ENCODE measurements at regions of chr10 and their contacts with region 1.

Region 1: DNA sequence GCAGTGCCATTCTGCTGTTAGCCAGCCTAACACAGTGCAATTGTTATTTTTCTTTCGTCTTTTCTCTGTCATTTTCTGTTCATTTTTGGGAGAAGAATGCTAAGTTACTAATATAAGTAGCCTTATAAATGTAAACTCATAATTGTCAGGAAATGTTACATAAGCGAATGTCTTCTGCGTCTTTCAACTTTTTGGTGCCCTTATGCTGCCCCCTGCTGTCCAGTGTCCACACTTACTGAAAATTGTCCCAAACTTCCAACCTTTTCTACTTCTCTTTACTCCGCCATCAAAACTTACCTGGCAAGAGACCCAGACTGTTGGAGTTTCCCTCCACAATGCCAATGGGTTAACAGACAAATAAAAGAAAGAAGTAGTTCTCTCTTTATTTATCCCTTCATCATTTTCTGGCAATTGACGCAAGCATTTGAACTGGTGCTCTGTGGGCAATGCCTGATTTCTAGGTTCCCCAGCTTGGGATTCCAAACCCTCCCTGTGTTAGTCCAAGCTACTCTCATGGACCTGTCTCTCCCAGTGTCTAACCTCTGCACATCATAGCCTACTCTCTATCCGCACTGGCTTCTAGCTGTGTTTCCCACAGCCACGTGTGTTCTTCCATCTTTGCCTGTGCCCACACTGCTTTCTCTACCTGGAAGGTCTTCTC is 21.0 kb upstream of the EPC1 start:
- DNase-seq: peak in 1 of 2 experiments; percentile 73
- ATAC-seq: peak; percentile 56 to 68; a peak in 4 of 6 replicates
- H3K4me3 ChIP-seq: no peak overlapping the region
- H3K27ac ChIP-seq: peak overlapping the region in 1 of 2 experiments; percentile 46; a peak in 1 of 6 replicates
- H3K4me1 ChIP-seq: peaks cover 18% of the 10 kb centered on the region
- CTCF ChIP-seq: peak; percentile 90
- EP300 ChIP-seq: no peak
- POLR2A ChIP-seq: no peak
- RAD21 ChIP-seq: peak; percentile 81 to 83

Region 2: DNA sequence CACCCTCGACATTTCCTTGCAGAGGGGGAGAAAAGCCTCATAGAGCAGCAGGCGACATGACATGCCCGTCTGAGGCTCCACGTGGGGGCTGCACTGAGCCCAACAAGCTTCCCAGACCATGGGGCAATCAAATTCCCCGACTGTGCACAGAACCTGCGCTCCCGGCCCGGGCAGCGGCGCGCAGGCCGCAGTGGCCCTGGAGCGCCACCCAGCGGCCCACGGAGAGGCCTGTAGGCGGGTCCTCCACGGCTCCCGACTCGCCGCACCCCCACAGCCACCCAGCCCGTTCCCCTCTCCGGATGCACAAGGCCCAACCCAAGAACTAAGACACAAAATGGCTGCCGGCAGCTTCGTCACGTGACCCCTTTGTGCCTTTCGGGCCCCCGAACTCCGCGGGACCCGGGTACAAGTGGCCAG is 21.8 kb before region 1 on chr10:
- CTCF ChIA-PET with region 1: interaction called, 118 read pairs
- POLR2A ChIA-PET with region 1: interaction called, 3 read pairs
- DNase-seq: peak; percentile 93 to 97
- ATAC-seq: peak; percentile 89 to 96
- H3K4me3 ChIP-seq: peak overlapping the region; percentile 78
- H3K27ac ChIP-seq: peak overlapping the region; percentile 99 to 100
- H3K4me1 ChIP-seq: peaks cover 56% of the 10 kb centered on the region; the same call in 2 of the 3 replicates
- CTCF ChIP-seq: peak; percentile 95
- EP300 ChIP-seq: no peak
- POLR2A ChIP-seq: no peak
- RAD21 ChIP-seq: peak; percentile 72 to 94

Region 3: DNA sequence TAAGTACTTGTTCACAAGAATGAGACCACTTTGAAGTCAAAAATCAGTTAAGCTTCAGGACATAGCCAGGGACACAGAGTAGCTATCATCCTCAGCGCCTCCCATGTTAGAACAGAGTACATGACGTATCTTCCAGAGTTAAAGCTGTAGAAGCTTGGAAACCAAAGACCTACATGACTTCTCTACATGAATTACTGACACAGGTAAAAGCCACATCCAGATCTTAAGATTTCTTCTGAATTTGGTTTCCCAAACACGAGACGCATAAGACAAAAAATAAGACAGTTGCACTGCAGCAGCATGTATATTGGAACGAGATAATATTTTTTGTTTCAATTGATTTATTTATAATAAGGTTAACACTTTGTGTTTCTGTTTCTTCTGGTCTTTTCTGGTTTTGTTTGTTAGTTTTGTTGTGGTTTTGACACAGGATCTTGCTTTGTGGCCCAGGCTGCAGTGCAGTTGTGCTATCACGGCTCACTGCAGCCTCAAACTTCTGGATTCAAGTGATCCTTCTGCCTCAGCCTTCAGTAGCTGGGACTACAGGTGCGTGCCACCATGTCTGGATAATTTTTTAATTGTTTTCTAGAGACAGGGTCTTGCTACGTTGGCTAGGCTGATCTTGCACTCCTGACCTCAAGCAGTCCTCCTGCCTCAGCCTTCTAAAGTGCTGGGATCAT is 10.7 kb before region 1 on chr10:
- CTCF ChIA-PET with region 1: interaction called, 118 read pairs
- POLR2A ChIA-PET with region 1: interaction called, 3 read pairs
- DNase-seq: no peak
- ATAC-seq: no peak
- H3K4me3 ChIP-seq: no peak overlapping the region
- H3K27ac ChIP-seq: no peak overlapping the region
- H3K4me1 ChIP-seq: peaks cover 18% of the 10 kb centered on the region; the same call in 2 of the 3 replicates
- CTCF ChIP-seq: no peak
- EP300 ChIP-seq: no peak
- POLR2A ChIP-seq: no peak
- RAD21 ChIP-seq: no peak

Region 4: GRCh38 chr10:32378363-32379317 is 10.7 kb after region 1 on chr10:
- CTCF ChIA-PET with region 1: interaction called, 15 read pairs
- POLR2A ChIA-PET with region 1: interaction called, 4 read pairs
- DNase-seq: peak; percentile 79 to 90
- ATAC-seq: peak; percentile 98 to 99
- H3K4me3 ChIP-seq: peak overlapping the region; percentile 65
- H3K27ac ChIP-seq: peak overlapping the region; percentile 83 to 86
- H3K4me1 ChIP-seq: peaks cover 36% of the 10 kb centered on the region
- CTCF ChIP-seq: no peak
- EP300 ChIP-seq: no peak
- POLR2A ChIP-seq: no peak
- RAD21 ChIP-seq: no peak